PC-9 (cell line): ENCODE measurements at regions of chr12 and their contacts with region 1.

Region 1: DNA sequence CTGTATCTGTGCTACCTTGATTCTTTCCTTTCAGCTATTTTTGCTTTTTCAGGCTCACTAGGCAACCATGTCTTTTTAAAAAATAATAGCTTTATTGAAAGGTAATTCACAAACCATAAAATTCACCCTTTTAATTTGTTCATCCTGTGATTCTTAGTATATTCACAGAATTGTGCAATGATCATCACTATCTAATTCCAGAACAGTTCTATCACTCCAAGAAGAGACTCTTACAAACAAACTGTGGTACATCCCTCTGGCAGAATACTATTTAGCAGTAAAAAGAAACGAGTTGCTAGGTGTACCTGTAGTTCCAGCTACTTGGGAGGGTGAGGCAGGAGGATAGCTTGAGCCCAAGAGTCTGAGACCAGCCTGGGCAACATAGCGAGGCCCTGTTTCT is 14.8 kb downstream of the CREBL2 start:
- DNase-seq: no peak
- H3K4me3 ChIP-seq: no peak overlapping the region
- H3K27ac ChIP-seq: no peak overlapping the region
- H3K4me1 ChIP-seq: peaks cover 7% of the 10 kb centered on the region; the same call in 1 of the 2 replicates
- H3K27me3 ChIP-seq: no peaks in the 10 kb centered on the region
- CTCF ChIP-seq: no peak

Region 2: GRCh38 chr12:12568045-12568444 is 58.4 kb before region 1 on chr12:
- CTCF ChIA-PET with region 1: no interaction called
- POLR2A ChIA-PET with region 1: interaction called, 25 read pairs
- intact Hi-C with region 1: no loop called
- DNase-seq: no peak
- H3K4me3 ChIP-seq: no peak overlapping the region
- H3K27ac ChIP-seq: no peak overlapping the region
- H3K4me1 ChIP-seq: peaks cover 8% of the 10 kb centered on the region; the same call in 1 of the 2 replicates
- H3K27me3 ChIP-seq: no peaks in the 10 kb centered on the region
- CTCF ChIP-seq: no peak